ENCODE measurements at regions of chr20 and their contacts with region 1.

Region 1: GRCh38 chr20:22684072-22684762 is 99.8 kb upstream of the FOXA2 start:
- DNase-seq: peak; percentile 57
- H3K4me3 ChIP-seq: no peak overlapping the region
- H3K27ac ChIP-seq: no peak overlapping the region
- H3K4me1 ChIP-seq: no peaks in the 10 kb centered on the region
- H3K27me3 ChIP-seq: no peaks in the 10 kb centered on the region
- CTCF ChIP-seq: peak; percentile 78 to 86 (median 81)
- EP300 ChIP-seq: no peak
- POLR2A ChIP-seq: no peak

Region 2: DNA sequence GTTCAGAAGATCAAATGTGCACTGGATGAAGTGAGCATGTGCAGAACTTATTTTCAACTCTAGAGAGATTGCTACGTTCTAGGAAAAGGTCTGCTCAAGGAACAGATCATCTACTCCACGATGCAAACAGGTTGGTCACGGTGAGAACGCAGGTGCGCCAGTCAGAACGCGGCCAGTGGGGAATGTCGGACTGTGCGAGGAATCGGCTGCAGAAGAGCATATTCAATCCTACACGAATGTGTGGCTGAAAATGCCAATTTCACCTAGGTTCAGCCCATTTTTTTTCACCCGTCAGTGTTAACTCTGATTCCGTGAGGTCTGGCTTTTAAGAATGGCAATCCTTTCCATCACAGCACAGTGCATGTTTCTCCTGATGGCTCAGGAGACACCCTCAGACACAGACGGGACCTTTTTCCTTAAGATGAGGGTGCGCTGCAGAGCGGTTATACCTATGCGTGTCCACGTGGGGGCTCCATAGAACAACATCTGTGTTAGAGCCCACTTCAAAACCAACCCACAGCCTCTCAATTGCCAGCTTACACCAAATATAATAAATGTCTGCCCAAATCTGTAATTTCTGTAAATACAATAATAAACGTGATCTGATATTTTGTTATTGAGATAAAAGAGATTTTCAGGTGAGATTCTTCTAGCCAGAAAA is 350.2 kb before region 1 on chr20:
- in situ Hi-C with region 1: loop called (anchors 5 to 10 kb)
- intact Hi-C with region 1: loop called (anchors 5 kb)
- DNase-seq: peak; percentile 52
- H3K4me3 ChIP-seq: no peak overlapping the region
- H3K27ac ChIP-seq: no peak overlapping the region
- H3K4me1 ChIP-seq: peaks cover 0 to 2% (median 0%) of the 10 kb centered on the region in 4 donors
- H3K27me3 ChIP-seq: peaks cover 39% of the 10 kb centered on the region
- CTCF ChIP-seq: peak; percentile 65 to 76 (median 65)
- EP300 ChIP-seq: no peak
- POLR2A ChIP-seq: no peak

Region 3: GRCh38 chr20:22339091-22339881 is 344.9 kb before region 1 on chr20:
- in situ Hi-C with region 1: loop called (anchors 5 to 10 kb)
- intact Hi-C with region 1: loop called (anchors 5 kb)
- DNase-seq: peak; percentile 45
- H3K4me3 ChIP-seq: no peak overlapping the region
- H3K27ac ChIP-seq: no peak overlapping the region
- H3K4me1 ChIP-seq: peaks cover 0 to 7% (median 0%) of the 10 kb centered on the region in 4 donors
- H3K27me3 ChIP-seq: peaks cover 3% of the 10 kb centered on the region
- CTCF ChIP-seq: peak; percentile 72 to 89 (median 75)
- EP300 ChIP-seq: no peak
- POLR2A ChIP-seq: no peak

Region 4: GRCh38 chr20:22385602-22386305 is 298.5 kb before region 1 on chr20:
- in situ Hi-C with region 1: no loop called
- intact Hi-C with region 1: no loop called
- DNase-seq: no peak
- H3K4me3 ChIP-seq: no peak overlapping the region
- H3K27ac ChIP-seq: no peak overlapping the region
- H3K4me1 ChIP-seq: peaks cover 0 to 18% (median 7%) of the 10 kb centered on the region in 4 donors
- H3K27me3 ChIP-seq: no peaks in the 10 kb centered on the region
- CTCF ChIP-seq: peak in 3 of 5 experiments; percentile 12 to 34 (median 19)
- EP300 ChIP-seq: no peak
- POLR2A ChIP-seq: no peak

Region 5: GRCh38 chr20:22623226-22623625 is 61.0 kb before region 1 on chr20:
- in situ Hi-C with region 1: no loop called
- intact Hi-C with region 1: no loop called
- DNase-seq: no peak
- H3K4me3 ChIP-seq: no peak overlapping the region
- H3K27ac ChIP-seq: no peak overlapping the region
- H3K4me1 ChIP-seq: no peaks in the 10 kb centered on the region
- H3K27me3 ChIP-seq: peaks cover 15% of the 10 kb centered on the region
- CTCF ChIP-seq: no peak
- EP300 ChIP-seq: no peak
- POLR2A ChIP-seq: no peak

Region 6: GRCh38 chr20:23331450-23332350 is 647.5 kb after region 1 on chr20:
- in situ Hi-C with region 1: no loop called
- intact Hi-C with region 1: loop called (anchors 10 kb)
- DNase-seq: no peak
- H3K4me3 ChIP-seq: no peak overlapping the region
- H3K27ac ChIP-seq: no peak overlapping the region
- H3K4me1 ChIP-seq: no peaks in the 10 kb centered on the region
- H3K27me3 ChIP-seq: no peaks in the 10 kb centered on the region
- CTCF ChIP-seq: no peak
- EP300 ChIP-seq: no peak
- POLR2A ChIP-seq: no peak

Measured in transverse colon (tissue), 4 donors.